Activated T-helper 1 cell treated with anti-CD3 and anti-CD28 coated beads, Interleukin-12 subunit alpha, Interleukin-12 subunit beta, Interleukin-2, Interleukin-4 antibody, amounts not matched to agents 30 ng/mL and 10 ng/mL and 1 ng/mL, durations not matched to agents 14 hours and 24 hours and 36 hours (primary cell): ENCODE measurements at regions of chrX and their contacts with region 1.

Region 1: GRCh38 chrX:119943185-119943988 is at the start of gene NKAP:
- DNase-seq: peak; percentile 78
- H3K4me3 Mint-ChIP-seq: peak within 1 kb of the TSS; percentile 93
- H3K27ac Mint-ChIP-seq: peak within 1 kb of the TSS; percentile 97
- H3K4me1 Mint-ChIP-seq: peaks cover 16% of the 10 kb centered on the region
- H3K27me3 Mint-ChIP-seq: peaks cover 2% of the 10 kb centered on the region
- total RNA-seq, gene NKAP: 9.4 and 10.1 TPM in 2 replicates

Region 2: GRCh38 chrX:119852382-119853353 is 90.7 kb before region 1 on chrX and contains the start of gene UPF3B:
- intact Hi-C with region 1: loop called (anchors 1 kb)
- DNase-seq: peak; percentile 90
- H3K4me3 Mint-ChIP-seq: peak within 1 kb of the TSS; percentile 94
- H3K27ac Mint-ChIP-seq: peak within 1 kb of the TSS; percentile 97
- H3K4me1 Mint-ChIP-seq: peaks cover 8% of the 10 kb centered on the region
- H3K27me3 Mint-ChIP-seq: no peaks in the 10 kb centered on the region
- total RNA-seq, gene UPF3B: 11.0 and 13.0 TPM in 2 replicates

Region 3: DNA sequence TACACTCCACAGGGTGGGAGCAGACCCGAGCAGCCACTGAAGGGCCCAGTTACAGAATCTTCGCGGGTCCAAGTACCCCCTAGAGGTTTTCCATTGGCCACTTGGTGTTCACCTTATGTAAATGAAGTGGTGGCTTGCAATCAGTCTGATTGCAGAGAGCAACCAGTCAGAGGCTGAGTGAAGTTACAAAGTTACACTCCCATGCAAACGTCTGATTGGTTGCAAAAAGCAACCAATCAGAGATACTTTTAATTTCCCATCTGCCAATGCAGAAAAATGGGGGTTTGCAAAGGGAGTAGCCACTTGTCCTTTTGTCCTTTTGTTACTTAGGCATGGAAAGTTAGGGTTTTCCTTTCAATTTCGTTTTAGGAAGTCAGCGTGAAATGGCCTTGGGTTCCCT is 27.2 kb after region 1 on chrX:
- intact Hi-C with region 1: no loop called
- DNase-seq: no peak
- H3K4me3 Mint-ChIP-seq: no peak overlapping the region
- H3K27ac Mint-ChIP-seq: no peak overlapping the region
- H3K4me1 Mint-ChIP-seq: no peaks in the 10 kb centered on the region
- H3K27me3 Mint-ChIP-seq: peaks cover 5% of the 10 kb centered on the region

Region 4: DNA sequence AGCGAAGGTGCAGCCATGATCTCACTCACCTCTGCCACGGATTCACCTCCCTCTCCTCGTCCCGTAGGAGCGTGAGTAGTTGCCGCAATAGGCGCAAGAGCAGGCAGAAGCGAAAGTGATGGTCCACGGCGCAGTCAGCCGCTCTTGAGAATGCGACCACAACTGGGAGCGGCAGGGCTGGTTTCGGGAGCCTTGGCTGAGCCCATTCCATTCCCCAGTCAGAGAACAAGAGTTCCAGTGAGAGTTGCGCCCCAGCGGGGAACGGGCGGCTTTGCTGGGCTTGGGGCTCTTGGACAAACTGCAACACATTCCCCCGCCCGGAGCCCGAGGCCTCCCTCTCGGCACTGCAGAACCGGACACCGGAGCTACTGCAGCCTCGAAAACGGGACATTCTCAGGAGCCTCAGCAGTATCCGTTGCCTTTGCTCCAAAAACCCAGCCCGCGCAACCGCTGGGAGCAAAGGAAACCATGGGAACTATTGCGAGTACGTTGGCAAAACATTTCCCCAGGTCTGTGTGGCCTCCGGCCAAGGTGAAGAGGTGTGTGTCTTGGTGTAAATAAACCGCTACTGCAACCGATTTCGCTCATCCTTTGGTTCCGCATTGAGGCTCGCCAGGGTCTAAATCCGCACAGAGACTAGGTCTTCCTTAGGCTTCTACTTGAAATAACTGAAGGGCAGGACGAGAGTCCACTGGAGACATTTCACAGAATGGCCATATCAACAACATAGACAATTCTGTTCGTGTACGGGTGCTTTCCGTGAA is 301.5 kb after region 1 on chrX:
- intact Hi-C with region 1: loop called (anchors 2 kb)
- DNase-seq: peak; percentile 20
- H3K4me3 Mint-ChIP-seq: peak overlapping the region; percentile 98
- H3K27ac Mint-ChIP-seq: peak overlapping the region; percentile 63
- H3K4me1 Mint-ChIP-seq: peaks cover 20% of the 10 kb centered on the region
- H3K27me3 Mint-ChIP-seq: no peaks in the 10 kb centered on the region